ENCODE measurements at regions of chr3 and their contacts with region 1.

Region 1: DNA sequence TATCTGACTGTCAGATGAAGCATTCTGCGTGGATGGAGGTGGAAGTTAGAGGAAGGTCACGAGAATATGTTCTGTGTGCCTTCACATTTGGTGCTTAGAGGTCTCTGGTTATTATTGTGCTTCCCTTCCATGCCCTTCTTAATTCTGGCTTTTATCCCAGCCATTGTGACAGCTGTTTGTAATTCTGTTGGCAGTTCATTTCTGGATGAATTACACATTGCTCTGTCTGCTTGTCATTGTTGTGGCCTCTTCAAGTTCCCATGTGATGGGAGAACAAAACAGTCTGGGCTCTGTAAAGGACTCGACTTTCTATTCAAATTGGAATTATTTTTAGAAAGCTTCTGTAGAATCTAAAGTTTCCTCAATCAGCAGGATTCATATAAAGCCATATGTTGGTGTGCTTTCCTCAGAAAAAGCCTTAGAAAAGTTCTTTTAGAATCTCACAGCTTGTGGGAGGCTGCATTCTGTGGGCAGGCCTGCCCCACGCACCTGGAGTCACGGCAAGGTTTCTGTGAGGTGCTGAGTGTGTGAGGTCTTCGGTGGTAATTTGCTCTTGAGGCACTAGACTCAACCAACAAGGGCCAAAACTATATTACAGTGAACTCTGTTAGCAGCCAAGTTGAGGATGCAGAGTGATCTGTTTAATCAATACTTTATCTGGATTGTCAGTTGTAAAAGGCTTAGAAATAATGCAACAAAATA is 397.4 kb upstream of the AZI2 start:
- DNase-seq: peak in 3 of 5 donors; percentile 22 to 26 (median 22)
- ATAC-seq: peak; percentile 89 to 95 (median 93)
- H3K4me3 ChIP-seq: no peak overlapping the region
- H3K27ac ChIP-seq: peak overlapping the region; percentile 65 to 96 (median 76)
- H3K4me1 ChIP-seq: peaks cover 0 to 37% (median 13%) of the 10 kb centered on the region in 12 donors
- H3K27me3 ChIP-seq: no peaks in the 10 kb centered on the region
- CTCF ChIP-seq: no peak
- POLR2A ChIP-seq: no peak

Region 2: GRCh38 chr3:28262001-28262400 is 484.1 kb before region 1 on chr3:
- intact Hi-C with region 1: no loop called
- DNase-seq: no peak
- ATAC-seq: no peak
- H3K4me3 ChIP-seq: no peak overlapping the region
- H3K27ac ChIP-seq: no peak overlapping the region
- H3K4me1 ChIP-seq: peaks cover 0 to 3% (median 0%) of the 10 kb centered on the region in 12 donors
- H3K27me3 ChIP-seq: no peaks in the 10 kb centered on the region
- CTCF ChIP-seq: no peak
- POLR2A ChIP-seq: no peak

Region 3: DNA sequence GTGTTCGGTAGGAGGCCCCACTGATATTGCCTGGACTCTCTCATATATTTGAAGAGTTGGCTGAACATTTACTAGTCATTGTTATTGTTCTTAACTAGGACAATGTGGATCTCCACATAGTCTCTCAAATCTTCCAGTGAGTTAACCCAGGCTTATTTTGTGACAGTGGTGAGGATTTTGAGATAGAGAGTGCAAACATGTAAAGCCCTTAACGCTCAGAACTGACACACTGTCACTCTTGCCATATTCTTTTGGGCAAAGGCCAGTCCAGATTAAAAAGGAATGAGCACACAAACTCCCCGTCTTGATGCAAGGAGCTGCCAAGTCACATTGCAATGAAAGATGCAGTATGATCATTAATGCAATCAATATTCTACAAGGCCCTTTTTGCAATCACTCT is 34.4 kb after region 1 on chr3:
- intact Hi-C with region 1: loop called in 1 of 10 experiments (anchors 5 kb)
- DNase-seq: no peak
- ATAC-seq: peak in 3 of 4 donors; percentile 24 to 57 (median 24)
- H3K4me3 ChIP-seq: no peak overlapping the region
- H3K27ac ChIP-seq: peak overlapping the region in 2 of 12 donors; percentile 17 to 23
- H3K4me1 ChIP-seq: peaks cover 0 to 16% (median 0%) of the 10 kb centered on the region in 12 donors
- H3K27me3 ChIP-seq: no peaks in the 10 kb centered on the region
- CTCF ChIP-seq: no peak
- POLR2A ChIP-seq: no peak